OCI-LY7 (cell line): ENCODE measurements at regions of chr10 and their contacts with region 1.

Region 1: GRCh38 chr10:67520924-67521520 is 175.0 kb downstream of the CTNNA3 start:
- DNase-seq: peak; percentile 52
- H3K4me3 ChIP-seq: no peak overlapping the region
- H3K27ac ChIP-seq: no peak overlapping the region
- H3K4me1 ChIP-seq: no peaks in the 10 kb centered on the region
- CTCF ChIP-seq: peak; percentile 95

Region 2: DNA sequence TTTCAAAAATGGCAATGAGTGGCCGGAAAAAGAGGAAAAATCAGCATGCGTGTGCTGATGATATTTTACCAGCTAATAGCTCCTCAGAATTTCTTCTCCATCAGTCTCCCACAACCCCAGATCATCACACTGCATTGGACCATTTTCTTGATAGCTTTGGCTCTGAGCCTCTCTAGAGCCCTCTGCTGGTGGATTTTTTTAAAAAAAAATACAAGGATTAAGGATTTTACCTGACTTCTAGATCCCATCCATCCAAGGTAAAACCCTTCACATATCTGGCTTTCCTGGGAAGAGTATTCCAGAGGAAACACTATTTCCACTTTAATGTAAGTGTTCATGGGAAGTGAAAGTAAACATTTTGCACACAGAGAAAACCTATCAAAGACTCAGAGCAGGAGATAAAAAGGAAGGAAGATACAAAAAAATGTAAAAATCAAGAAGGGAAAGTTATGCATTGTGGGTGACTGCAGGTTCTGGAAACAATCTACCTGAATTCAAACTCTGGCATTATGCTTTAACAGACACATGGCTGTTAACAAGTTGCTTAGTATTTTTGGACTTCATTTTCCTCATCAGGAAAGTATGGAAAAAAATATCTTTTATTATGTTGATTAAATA is 214.3 kb before region 1 on chr10:
- CTCF ChIA-PET with region 1: no interaction called
- POLR2A ChIA-PET with region 1: no interaction called
- intact Hi-C with region 1: loop called (anchors 10 kb)
- DNase-seq: peak; percentile 22
- H3K4me3 ChIP-seq: no peak overlapping the region
- H3K27ac ChIP-seq: no peak overlapping the region
- H3K4me1 ChIP-seq: no peaks in the 10 kb centered on the region
- CTCF ChIP-seq: peak; percentile 80

Region 3: DNA sequence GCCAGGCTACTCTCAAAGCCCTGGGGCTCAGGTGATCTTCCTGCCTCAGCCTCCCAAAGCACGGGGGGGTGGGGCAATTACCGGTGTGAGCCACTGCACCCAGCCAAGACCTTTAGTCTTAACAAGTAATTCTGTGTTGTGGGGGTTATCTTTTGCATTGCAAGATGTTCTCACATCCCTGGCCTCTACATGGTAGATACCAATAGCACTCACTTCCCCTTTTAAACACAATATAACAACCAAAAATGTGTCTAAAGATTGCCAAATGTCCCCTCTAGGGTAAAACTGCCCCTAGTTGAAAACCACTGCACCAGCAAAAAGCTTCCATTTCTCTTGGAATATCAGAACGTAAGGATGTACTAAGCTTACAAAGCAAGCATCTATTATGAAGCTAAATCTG is 50.0 kb before region 1 on chr10:
- CTCF ChIA-PET with region 1: no interaction called
- POLR2A ChIA-PET with region 1: no interaction called
- intact Hi-C with region 1: no loop called
- DNase-seq: no peak
- H3K4me3 ChIP-seq: no peak overlapping the region
- H3K27ac ChIP-seq: no peak overlapping the region
- H3K4me1 ChIP-seq: no peaks in the 10 kb centered on the region
- CTCF ChIP-seq: no peak